ENCODE measurements at regions of chr2 and their contacts with region 1.

Region 1: GRCh38 chr2:153020201-153020600 is 301.8 kb downstream of the ARL6IP6 start:
- DNase-seq: no peak
- H3K4me3 ChIP-seq: no peak overlapping the region
- CTCF ChIP-seq: no peak
- POLR2A ChIP-seq: no peak

Region 2: DNA sequence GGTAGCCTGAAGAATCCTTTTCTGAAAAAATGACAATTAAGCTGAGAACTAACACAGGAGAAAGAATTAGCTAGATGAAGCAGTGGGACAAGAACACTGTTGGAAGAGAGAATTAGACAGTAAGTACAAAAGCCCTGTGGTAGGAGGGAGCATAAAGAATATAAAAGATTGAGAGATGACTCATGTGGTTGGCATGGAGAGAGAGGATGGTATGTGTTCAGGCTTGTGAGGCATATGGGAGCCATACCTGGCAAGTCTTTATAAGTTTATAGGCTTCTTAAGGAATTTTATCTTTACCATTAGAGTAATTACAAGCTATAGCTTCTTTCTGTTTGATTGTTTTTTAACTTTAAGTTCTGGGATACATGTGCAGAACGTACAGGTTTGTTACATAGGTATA is 23.2 kb after region 1 on chr2:
- intact Hi-C with region 1: loop called (anchors 1 kb)
- DNase-seq: no peak
- H3K4me3 ChIP-seq: no peak overlapping the region
- CTCF ChIP-seq: no peak
- POLR2A ChIP-seq: no peak

Measured in lower leg skin (tissue), 4 donors.